ENCODE measurements at regions of chr18 and their contacts with region 1.

Region 1: DNA sequence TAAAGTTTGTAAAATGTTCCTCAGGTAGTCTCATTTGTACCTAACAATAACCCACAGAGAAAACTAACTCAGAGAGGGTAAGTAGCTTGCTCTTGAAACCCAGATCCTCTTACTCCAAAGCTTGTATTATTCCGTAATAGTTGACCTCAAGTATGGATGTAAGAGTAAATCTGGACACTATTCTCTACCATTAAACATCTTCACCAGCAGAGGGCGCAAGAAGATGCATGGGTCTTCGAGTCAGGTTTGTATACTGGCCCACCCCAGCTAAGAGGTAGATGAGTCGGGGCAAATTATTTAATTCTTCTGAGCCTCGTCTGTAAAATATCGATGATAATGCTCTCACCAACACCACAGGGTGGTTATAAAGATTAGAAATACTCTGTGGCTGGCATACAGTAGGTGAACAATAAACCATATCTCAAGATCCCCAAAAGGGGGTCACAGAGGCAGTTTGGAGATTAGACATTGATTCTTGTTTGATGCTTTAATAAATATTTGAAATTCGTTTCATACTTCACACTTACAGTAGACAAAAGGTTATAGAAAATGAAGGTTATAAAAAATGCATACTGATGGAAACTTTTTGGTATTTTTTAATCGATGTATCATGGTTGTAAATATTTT is 3.5 kb upstream of the CABLES1 start:
- DNase-seq: peak; percentile 41
- H3K4me3 Mint-ChIP-seq: no peak overlapping the region
- H3K27ac Mint-ChIP-seq: no peak overlapping the region
- H3K4me1 Mint-ChIP-seq: peaks cover 19% of the 10 kb centered on the region
- H3K27me3 Mint-ChIP-seq: no peaks in the 10 kb centered on the region

Region 2: GRCh38 chr18:22933206-22933957 is 198.4 kb before region 1 on chr18 and contains the start of gene RBBP8:
- intact Hi-C with region 1: loop called (anchors 2 kb)
- DNase-seq: peak; percentile 84
- H3K4me3 Mint-ChIP-seq: peak within 1 kb of the TSS; percentile 97
- H3K27ac Mint-ChIP-seq: peak within 1 kb of the TSS; percentile 93
- H3K4me1 Mint-ChIP-seq: peaks cover 39% of the 10 kb centered on the region
- H3K27me3 Mint-ChIP-seq: no peaks in the 10 kb centered on the region
- total RNA-seq, gene RBBP8: 92.8 and 94.5 TPM in 2 replicates

Region 3: DNA sequence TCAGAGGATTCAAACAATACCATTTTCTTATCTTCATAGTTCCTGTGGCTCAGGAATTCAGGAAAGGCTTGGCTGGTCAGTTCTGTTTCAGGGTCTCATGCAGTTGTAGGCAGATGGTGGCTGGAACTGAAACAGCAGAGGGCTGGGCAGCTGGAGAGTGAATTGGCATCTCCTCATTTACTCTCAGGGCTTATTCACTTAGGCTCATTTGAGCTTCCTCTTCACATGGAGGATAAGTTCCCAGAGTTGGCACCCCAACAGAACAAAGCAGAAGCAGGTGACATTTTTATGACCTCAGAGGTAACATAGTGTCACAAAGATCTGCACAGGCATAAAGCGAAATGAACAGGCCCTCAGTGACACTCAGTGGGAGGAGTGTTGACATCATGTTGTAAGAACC is 132.6 kb before region 1 on chr18:
- intact Hi-C with region 1: no loop called
- DNase-seq: no peak
- H3K4me3 Mint-ChIP-seq: no peak overlapping the region
- H3K27ac Mint-ChIP-seq: no peak overlapping the region
- H3K4me1 Mint-ChIP-seq: peaks cover 10% of the 10 kb centered on the region
- H3K27me3 Mint-ChIP-seq: no peaks in the 10 kb centered on the region

Region 4: GRCh38 chr18:23209031-23209430 is 77.2 kb after region 1 on chr18:
- intact Hi-C with region 1: loop called (anchors 2 kb)
- DNase-seq: no peak
- H3K4me3 Mint-ChIP-seq: no peak overlapping the region
- H3K27ac Mint-ChIP-seq: peak overlapping the region; percentile 97
- H3K4me1 Mint-ChIP-seq: peaks cover 45% of the 10 kb centered on the region
- H3K27me3 Mint-ChIP-seq: no peaks in the 10 kb centered on the region

Region 5: GRCh38 chr18:23283916-23284430 is 152.2 kb after region 1 on chr18:
- intact Hi-C with region 1: loop called (anchors 10 kb)
- DNase-seq: no peak
- H3K4me3 Mint-ChIP-seq: no peak overlapping the region
- H3K27ac Mint-ChIP-seq: peak overlapping the region; percentile 76
- H3K4me1 Mint-ChIP-seq: peaks cover 28% of the 10 kb centered on the region
- H3K27me3 Mint-ChIP-seq: no peaks in the 10 kb centered on the region

Region 6: DNA sequence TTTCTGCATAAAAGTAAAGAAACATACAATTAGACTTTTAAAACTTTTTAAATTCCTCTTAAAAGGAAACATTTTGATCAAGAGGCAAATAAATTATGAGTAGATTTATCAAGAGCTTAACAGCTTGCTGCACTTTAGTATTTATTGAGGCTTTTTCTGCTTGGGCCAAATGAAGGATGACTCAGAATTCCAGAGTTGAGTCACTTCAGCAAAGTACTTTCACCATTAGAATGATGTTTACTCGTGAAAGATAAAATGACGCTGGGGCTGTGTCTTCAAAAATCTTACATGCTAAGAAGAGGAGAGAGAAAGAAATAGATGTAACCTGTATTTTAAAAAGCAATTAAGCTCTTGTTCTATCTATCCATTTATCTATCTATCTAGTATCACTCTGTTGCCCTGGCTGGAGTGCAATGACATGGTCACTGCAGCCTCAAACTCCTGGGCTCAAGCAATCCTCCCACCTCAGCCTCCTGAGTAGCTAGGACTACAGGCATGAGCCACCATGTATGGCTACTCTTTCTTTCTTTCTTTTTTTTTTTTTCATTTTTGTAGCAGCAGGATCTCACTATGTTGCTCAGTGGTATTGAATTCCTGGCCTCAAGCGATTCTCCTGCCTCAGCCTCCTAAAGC is 246.0 kb after region 1 on chr18:
- intact Hi-C with region 1: loop called (anchors 1 kb)
- DNase-seq: no peak
- H3K4me3 Mint-ChIP-seq: no peak overlapping the region
- H3K27ac Mint-ChIP-seq: peak overlapping the region; percentile 82
- H3K4me1 Mint-ChIP-seq: peaks cover 24% of the 10 kb centered on the region
- H3K27me3 Mint-ChIP-seq: no peaks in the 10 kb centered on the region

Measured in activated T-helper 2 cell treated with anti-CD3 and anti-CD28 coated beads, Interferon-gamma antibody, Interleukin-2, Interleukin-4, amounts not matched to agents 10 μg/mL and 5 μg/mL and 100 μg/mL, durations not matched to agents 14 hours and 24 hours and 36 hours (primary cell).